T-cell (primary cell): ENCODE measurements at regions of chr10 and their contacts with region 1.

Region 1: DNA sequence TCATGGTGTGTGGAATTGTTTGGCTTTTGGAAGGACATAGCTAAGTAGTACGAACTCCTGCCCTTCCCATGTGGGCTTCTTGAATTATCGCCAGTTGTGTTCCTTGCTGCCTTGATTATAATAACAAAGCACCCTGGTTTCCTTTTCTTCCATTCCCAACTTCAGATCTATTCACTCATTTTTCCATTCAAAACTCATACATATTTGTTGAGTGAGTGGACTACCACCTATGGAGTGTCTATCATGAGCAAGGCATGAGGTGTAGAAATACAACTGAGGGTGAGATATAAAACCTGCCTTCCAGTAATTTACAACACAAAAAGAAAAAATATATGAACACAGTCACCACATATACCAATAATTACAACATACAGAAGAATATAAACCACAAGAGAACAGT is 4.9 kb upstream of the COL17A1 start:
- DNase-seq: no peak
- ATAC-seq: no peak
- H3K4me3 ChIP-seq: no peak overlapping the region
- H3K4me3 Mint-ChIP-seq: no peak overlapping the region
- H3K27ac ChIP-seq: no peak overlapping the region
- H3K27ac Mint-ChIP-seq: no peak overlapping the region
- H3K4me1 ChIP-seq: no peaks in the 10 kb centered on the region
- H3K4me1 Mint-ChIP-seq: peaks cover 0 to 5% (median 3%) of the 10 kb centered on the region in 3 donors
- H3K27me3 ChIP-seq: no peaks in the 10 kb centered on the region
- H3K27me3 Mint-ChIP-seq: no peaks in the 10 kb centered on the region

Region 2: DNA sequence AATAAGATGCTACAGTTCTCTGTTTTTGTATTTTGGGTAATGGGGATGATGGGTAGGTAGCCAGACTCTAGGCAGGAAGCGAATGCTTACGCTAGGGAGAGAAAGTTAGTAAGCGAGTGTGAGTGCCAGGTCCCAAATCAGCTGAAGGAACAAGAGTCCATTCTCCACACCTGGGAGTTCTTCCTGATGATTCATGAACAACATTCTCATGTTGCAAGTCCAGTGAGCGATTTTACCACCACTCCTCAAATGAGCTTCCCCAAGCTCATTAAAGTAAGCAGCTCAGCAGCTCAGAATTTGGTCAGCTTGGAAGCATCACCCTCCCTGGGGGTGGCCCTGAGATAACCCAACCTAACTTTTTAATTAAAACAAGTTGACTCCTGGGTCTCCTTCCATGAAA is 262.5 kb before region 1 on chr10:
- CTCF ChIA-PET with region 1: no interaction called
- POLR2A ChIA-PET with region 1: interaction called in 1 of 2 experiments, 13 read pairs
- DNase-seq: no peak
- ATAC-seq: no peak
- H3K4me3 ChIP-seq: no peak overlapping the region
- H3K4me3 Mint-ChIP-seq: no peak overlapping the region
- H3K27ac ChIP-seq: no peak overlapping the region
- H3K27ac Mint-ChIP-seq: no peak overlapping the region
- H3K4me1 ChIP-seq: peaks cover 0 to 3% of the 10 kb centered on the region in 2 experiments
- H3K4me1 Mint-ChIP-seq: peaks cover 0 to 4% (median 0%) of the 10 kb centered on the region in 3 donors
- H3K27me3 ChIP-seq: peaks cover 0 to 14% of the 10 kb centered on the region in 2 experiments
- H3K27me3 Mint-ChIP-seq: peaks cover 5 to 6% of the 10 kb centered on the region in 2 donors

Region 3: DNA sequence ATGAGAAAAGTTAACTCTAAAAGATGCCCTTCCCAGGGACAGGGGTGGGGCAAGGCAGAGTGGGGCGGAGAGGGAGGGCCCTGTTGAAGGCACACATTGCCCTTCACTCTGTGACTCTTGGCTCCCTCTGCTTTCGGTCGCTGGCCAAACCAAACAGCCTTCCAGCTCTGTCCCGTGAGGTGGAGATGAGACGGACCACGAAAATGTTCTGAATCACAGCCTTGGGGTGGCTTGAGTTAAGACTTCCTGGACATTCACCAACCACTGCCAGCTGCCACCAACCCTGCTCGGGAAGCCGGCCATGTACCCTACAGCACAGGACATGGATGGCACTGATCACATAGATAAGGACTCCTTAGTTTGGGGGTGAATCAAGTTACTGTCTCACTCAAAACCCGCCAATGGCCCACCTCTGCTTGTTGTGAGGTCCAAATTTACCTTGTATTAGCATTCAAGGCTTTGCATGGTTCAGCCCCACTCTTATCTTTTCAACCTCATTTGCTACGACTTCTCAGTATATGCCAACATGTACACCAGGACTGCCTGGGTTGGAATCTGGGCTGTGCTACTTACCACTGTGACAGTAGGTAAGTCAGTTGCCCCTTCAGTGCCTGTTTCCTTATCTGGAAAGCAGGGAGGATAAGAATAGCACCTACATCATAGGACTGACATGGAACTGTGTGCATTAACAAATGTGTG is 219.5 kb after region 1 on chr10:
- CTCF ChIA-PET with region 1: no interaction called
- POLR2A ChIA-PET with region 1: no interaction called
- DNase-seq: peak in 1 of 35 experiments; percentile 12
- ATAC-seq: no peak
- H3K4me3 ChIP-seq: no peak overlapping the region
- H3K4me3 Mint-ChIP-seq: peak overlapping the region in 1 of 3 donors; percentile 65
- H3K27ac ChIP-seq: no peak overlapping the region
- H3K27ac Mint-ChIP-seq: peak overlapping the region; percentile 55 to 56
- H3K4me1 ChIP-seq: peaks cover 50 to 57% of the 10 kb centered on the region in 2 experiments
- H3K4me1 Mint-ChIP-seq: peaks cover 67 to 70% (median 69%) of the 10 kb centered on the region in 3 donors
- H3K27me3 ChIP-seq: no peaks in the 10 kb centered on the region
- H3K27me3 Mint-ChIP-seq: no peaks in the 10 kb centered on the region